ENCODE measurements at regions of chr15 and their contacts with region 1.

Region 1: GRCh38 chr15:51971375-51972133 is at the start of gene LEO1:
- DNase-seq: peak; percentile 92
- H3K4me3 ChIP-seq: peak within 1 kb of the TSS; percentile 63 to 95 (median 72)
- H3K27ac ChIP-seq: peak within 1 kb of the TSS; percentile 90 to 93 (median 91)
- H3K4me1 ChIP-seq: peaks cover 6 to 19% (median 15%) of the 10 kb centered on the region in 4 donors
- H3K27me3 ChIP-seq: no peaks in the 10 kb centered on the region
- CTCF ChIP-seq: peak; percentile 20 to 63 (median 36)
- EP300 ChIP-seq: no peak
- POLR2A ChIP-seq: peak; percentile 72
- total RNA-seq, gene LEO1: 27.2 to 38.2 (median 30.9) TPM

Region 2: GRCh38 chr15:52179278-52180195 is 208.0 kb after region 1 on chr15:
- in situ Hi-C with region 1: no loop called
- intact Hi-C with region 1: loop called (anchors 5 kb)
- DNase-seq: peak; percentile 90
- H3K4me3 ChIP-seq: peak overlapping the region; percentile 75 to 85 (median 82)
- H3K27ac ChIP-seq: peak overlapping the region; percentile 88 to 92 (median 90)
- H3K4me1 ChIP-seq: peaks cover 0 to 15% (median 12%) of the 10 kb centered on the region in 4 donors
- H3K27me3 ChIP-seq: peaks cover 3% of the 10 kb centered on the region
- CTCF ChIP-seq: peak in 1 of 5 experiments; percentile 6
- EP300 ChIP-seq: no peak
- POLR2A ChIP-seq: peak; percentile 41

Region 3: DNA sequence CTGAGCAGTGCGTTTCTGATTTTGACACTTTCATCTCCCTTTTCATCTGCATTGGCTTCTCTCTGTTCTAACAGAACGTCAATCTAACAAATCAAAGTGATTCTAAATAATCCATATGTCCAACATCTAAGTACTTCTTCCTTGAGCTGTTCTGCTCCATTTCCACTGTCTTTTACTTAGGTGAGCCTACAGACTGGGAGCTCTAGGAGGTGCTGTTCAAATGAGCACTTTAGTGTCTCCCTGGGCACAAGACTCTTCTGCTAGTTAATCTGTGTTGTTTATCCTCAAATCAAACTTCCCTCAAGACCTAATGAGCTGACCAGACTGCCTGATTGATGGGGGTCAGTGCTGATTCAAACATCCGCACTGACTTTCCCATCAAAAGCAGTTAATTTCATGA is 1379.8 kb after region 1 on chr15:
- in situ Hi-C with region 1: no loop called
- intact Hi-C with region 1: no loop called
- DNase-seq: no peak
- H3K4me3 ChIP-seq: no peak overlapping the region
- H3K27ac ChIP-seq: no peak overlapping the region
- H3K4me1 ChIP-seq: no peaks in the 10 kb centered on the region
- H3K27me3 ChIP-seq: no peaks in the 10 kb centered on the region
- CTCF ChIP-seq: no peak
- EP300 ChIP-seq: no peak
- POLR2A ChIP-seq: no peak